Mucosa of descending colon (tissue), 3 donors: ENCODE measurements at regions of chr2 and their contacts with region 1.

Region 1: GRCh38 chr2:23926750-23927571 is at the start of gene ATAD2B:
- DNase-seq: peak; percentile 94 to 97 (median 94)
- ATAC-seq: peak; percentile 95
- H3K4me3 ChIP-seq: peak within 1 kb of the TSS; percentile 85
- H3K4me1 ChIP-seq: peaks cover 26% of the 10 kb centered on the region
- CTCF ChIP-seq: peak; percentile 90
- total RNA-seq, gene ATAD2B: 25.8 to 38.5 (median 27.9) TPM

Region 2: DNA sequence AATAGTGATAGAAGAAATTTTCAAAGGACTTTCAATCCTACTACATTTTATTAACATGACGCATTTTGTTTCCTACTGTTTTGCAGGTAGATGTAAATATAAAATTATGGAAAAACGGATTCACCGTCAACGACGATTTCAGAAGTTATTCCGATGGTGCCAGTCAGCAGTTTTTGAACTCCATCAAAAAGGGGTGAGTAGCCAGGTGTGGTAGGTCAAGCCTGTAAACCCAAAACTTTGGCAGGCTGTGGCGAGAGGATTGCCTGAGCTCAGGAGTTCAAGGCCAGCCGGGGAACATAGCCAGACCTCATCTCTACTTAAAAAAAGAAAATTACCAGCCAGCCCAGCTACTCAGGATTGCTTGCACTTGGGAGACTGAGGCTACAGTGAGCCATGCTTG is 49.9 kb after region 1 on chr2:
- intact Hi-C with region 1: no loop called
- DNase-seq: no peak
- ATAC-seq: no peak
- H3K4me3 ChIP-seq: no peak overlapping the region
- H3K4me1 ChIP-seq: no peaks in the 10 kb centered on the region
- CTCF ChIP-seq: no peak

Region 3: DNA sequence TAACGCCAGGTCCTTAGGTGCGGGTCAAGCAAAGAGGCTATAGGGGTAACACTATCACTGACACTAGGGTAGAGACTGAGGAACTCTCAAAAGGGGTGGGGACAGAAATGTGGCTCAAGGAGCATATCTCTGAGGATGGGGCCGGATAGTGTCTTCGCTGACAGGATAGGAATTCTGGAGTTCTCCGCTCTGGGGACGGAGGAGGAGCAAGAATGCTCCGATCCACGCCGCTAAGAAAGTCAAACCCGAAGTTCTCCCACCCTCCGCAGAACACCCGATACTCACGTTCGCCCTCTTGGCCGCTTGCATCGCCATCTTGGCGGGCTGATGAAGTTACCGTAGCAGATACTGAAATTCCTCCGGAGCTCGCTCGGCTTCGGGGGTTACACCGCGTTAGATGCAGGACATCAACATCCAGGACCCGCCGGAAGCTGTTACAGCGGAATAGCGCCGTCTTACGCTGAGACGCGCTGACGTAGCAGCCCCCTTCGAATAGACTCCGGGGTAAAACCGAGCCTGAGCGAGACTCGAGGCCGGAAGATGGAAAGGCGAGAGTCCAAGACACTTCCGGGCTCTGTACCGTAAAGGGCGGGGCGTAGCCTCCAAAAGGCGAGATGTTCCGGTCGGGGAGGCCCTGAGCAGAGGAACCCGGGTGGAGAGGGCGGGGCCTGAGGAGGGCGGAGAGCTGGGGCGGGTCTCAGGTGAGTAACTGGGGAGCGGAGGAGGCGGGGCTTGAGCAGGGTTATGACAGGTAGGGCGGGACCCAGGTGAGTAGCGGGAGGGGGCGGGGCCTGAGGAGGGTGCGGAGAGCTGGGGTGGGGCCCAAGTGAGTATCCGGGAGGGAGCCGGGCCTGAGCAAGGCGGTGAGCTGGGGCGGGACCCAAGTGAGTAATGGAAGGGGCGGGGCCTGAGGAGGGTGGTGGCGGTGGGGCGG is 149.2 kb after region 1 on chr2 and contains the start of gene SF3B6:
- intact Hi-C with region 1: loop called (anchors 5 kb)
- DNase-seq: peak; percentile 100
- ATAC-seq: peak; percentile 88
- H3K4me3 ChIP-seq: peak within 1 kb of the TSS; percentile 64
- H3K4me1 ChIP-seq: peaks cover 19% of the 10 kb centered on the region
- CTCF ChIP-seq: no peak
- total RNA-seq, gene SF3B6: 75.1 to 90.1 (median 76.1) TPM